ENCODE measurements at regions of chr15 and their contacts with region 1.

Region 1: DNA sequence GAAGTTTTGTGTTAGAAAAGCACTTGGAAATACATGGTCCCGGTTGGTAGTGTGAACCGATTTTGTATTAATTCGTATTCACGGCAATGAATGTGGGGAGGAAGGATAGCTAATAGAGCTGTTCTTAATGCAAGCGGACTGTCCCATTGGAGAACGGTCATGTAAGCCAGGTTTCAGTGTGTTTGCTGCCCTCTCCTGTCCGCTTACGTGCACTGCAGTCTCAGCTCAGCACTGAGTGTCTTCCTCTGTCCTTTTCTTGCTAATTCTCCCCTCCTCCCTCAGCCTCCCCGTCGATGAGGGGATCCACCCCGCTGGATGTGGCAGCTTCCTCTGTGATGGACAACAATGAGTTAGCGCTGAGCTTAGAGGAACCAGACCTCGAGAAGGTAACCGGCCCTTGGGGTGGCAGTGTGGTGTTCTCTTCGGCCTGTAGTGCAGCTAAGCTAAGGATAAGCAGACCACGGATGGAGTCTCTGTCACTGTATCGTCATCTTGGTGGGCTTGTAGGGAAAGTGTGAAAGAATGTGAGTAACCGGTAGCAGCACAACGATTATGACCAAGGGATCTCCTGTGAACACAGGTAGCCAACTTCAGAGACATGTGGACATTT is 267.5 kb upstream of the CHRM5 start:
- DNase-seq: peak; percentile 57 to 89 (median 72)
- H3K4me3 ChIP-seq: no peak overlapping the region
- H3K27ac ChIP-seq: no peak overlapping the region
- H3K4me1 ChIP-seq: no peaks in the 10 kb centered on the region
- H3K27me3 ChIP-seq: no peaks in the 10 kb centered on the region
- CTCF ChIP-seq: peak; percentile 77 to 92 (median 90)
- POLR2A ChIP-seq: no peak

Region 2: DNA sequence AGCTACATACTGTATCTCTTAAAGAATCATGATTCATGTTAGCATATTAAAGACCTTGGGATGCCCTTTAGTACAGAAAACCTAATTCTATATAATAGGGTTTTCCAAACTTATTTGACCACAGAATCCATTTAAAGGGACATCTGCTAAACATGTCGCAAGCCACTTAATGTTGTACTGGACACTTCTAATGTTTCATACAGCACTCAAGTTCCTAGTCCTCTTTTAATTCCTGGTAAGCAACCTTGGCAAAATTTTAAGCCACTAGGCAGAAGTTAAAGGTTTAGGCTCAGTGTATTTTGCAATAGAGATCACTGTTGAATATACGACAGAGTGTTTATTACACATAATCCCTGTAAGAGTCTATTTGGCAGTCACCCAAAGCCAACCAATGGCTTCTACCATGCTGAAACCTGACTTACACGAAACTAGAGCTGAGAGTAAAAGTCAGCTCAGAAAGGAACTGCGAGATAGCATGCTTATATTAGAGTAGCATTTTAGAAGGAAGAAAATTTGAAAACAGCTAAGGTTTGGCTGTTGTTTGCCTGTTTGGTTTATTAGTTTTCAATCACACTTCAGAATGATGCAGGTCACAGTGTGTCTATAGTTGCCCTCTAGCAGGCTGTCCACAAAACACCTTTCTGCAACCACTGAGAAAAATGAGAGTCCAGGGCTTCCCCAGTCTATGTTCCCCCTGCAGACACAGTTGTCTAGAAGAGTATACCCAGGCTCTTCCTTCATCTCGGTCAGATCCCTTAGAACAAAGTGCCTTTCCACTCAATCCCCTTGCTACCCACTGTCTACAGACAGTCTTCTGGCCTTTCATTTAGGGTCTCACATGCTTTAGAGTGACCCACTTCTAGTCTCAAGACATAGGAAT is 610.7 kb before region 1 on chr15:
- intact Hi-C with region 1: loop called in 1 of 2 experiments (anchors 10 kb)
- DNase-seq: peak in 2 of 7 donors; percentile 16 to 18
- H3K4me3 ChIP-seq: no peak overlapping the region
- H3K27ac ChIP-seq: no peak overlapping the region
- H3K4me1 ChIP-seq: no peaks in the 10 kb centered on the region
- H3K27me3 ChIP-seq: no peaks in the 10 kb centered on the region
- CTCF ChIP-seq: no peak
- POLR2A ChIP-seq: no peak

Region 3: GRCh38 chr15:33234014-33234461 is 466.8 kb before region 1 on chr15:
- intact Hi-C with region 1: loop called in 1 of 2 experiments (anchors 10 kb)
- DNase-seq: peak in 3 of 7 donors; percentile 11 to 21 (median 21)
- H3K4me3 ChIP-seq: no peak overlapping the region
- H3K27ac ChIP-seq: no peak overlapping the region
- H3K4me1 ChIP-seq: no peaks in the 10 kb centered on the region
- H3K27me3 ChIP-seq: no peaks in the 10 kb centered on the region
- CTCF ChIP-seq: peak in 5 of 6 experiments; percentile 25 to 55 (median 45)
- POLR2A ChIP-seq: no peak

Region 4: DNA sequence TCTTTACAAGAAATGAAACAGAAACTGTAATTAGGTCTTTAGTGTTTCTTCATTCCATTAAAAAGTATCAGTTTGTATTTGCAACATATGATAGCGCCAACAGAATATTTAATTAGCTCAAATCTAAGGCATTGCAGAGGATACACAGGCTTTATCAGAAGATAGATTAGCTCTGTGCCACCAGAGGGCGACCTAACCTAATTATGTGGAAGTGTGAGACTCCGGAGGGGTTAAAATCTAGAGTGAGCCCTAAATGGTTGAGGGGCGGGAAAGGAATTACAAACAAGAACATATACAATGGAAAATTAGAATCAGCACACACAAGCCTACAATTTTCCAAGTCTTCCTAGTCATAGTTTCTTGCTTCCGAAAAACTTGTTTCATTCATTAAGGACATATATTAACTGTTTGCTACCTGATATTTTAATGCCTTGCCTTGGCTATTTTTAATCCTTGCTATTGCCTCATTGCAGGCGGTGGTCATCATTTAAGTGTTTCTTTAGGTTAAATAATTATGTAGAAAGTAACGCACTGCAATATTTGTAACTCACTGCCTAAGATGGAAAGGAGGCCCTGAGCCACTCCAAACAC is 408.0 kb before region 1 on chr15:
- intact Hi-C with region 1: loop called (anchors 5 to 10 kb)
- DNase-seq: peak; percentile 48 to 78 (median 63)
- H3K4me3 ChIP-seq: no peak overlapping the region
- H3K27ac ChIP-seq: no peak overlapping the region
- H3K4me1 ChIP-seq: no peaks in the 10 kb centered on the region
- H3K27me3 ChIP-seq: no peaks in the 10 kb centered on the region
- CTCF ChIP-seq: peak; percentile 52 to 79 (median 75)
- POLR2A ChIP-seq: no peak

Region 5: DNA sequence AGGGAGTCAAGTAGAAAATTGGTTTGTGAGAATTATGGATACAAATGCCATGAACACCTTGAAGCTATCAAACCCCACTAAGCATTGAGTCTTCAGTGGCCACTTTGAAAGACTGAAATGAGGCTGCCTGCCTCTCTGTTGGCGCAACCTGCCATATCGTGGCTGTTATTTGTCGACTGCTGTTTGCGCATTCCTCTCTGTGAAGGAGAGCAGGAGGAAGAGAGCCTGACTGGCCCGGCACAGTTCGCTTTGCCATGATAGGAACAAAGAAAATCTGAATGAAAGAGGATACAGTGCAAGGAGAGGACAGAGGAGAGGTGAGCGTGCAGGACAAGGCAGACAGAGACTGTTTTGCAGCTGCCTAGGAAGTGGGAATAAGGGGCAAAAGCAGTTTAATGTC is 100.6 kb before region 1 on chr15:
- intact Hi-C with region 1: no loop called
- DNase-seq: no peak
- H3K4me3 ChIP-seq: no peak overlapping the region
- H3K27ac ChIP-seq: no peak overlapping the region
- H3K4me1 ChIP-seq: no peaks in the 10 kb centered on the region
- H3K27me3 ChIP-seq: no peaks in the 10 kb centered on the region
- CTCF ChIP-seq: no peak
- POLR2A ChIP-seq: no peak

Region 6: GRCh38 chr15:33788906-33789540 is 88.2 kb after region 1 on chr15:
- intact Hi-C with region 1: no loop called
- DNase-seq: no peak
- H3K4me3 ChIP-seq: no peak overlapping the region
- H3K27ac ChIP-seq: no peak overlapping the region
- H3K4me1 ChIP-seq: no peaks in the 10 kb centered on the region
- H3K27me3 ChIP-seq: no peaks in the 10 kb centered on the region
- CTCF ChIP-seq: no peak
- POLR2A ChIP-seq: no peak

Measured in adrenal gland (tissue), 19 donors.